ENCODE measurements at regions of chr14 and their contacts with region 1.

Region 1: DNA sequence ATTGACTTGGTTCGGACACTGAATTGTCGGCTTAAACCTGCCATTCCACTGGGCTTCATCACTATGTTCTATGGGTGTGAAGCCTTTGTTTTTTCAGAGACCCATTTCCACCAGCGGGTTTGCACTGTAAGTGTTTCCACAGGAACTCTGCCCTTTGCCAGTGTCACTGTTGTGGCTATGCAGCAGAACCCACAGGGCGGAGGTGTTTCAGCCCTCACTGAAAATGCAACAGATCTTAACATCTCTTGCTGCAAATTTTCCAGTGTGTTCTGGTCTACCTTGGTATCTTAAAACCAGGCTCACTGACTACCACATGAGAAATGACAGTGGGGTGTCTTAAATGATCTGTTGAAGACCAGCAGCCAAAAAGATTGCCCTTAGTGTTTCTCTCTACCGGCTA is 21.1 kb downstream of the PRKCH start:
- DNase-seq: peak; percentile 48 to 93 (median 84)
- ATAC-seq: peak; percentile 52 to 64
- H3K4me3 Mint-ChIP-seq: peak overlapping the region; percentile 69 to 92 (median 86)
- H3K27ac Mint-ChIP-seq: peak overlapping the region in 9 of 10 donors; percentile 94 to 100 (median 99)
- H3K4me1 Mint-ChIP-seq: peaks cover 53 to 97% (median 94%) of the 10 kb centered on the region in 4 donors
- H3K27me3 Mint-ChIP-seq: no peaks in the 10 kb centered on the region

Region 2: DNA sequence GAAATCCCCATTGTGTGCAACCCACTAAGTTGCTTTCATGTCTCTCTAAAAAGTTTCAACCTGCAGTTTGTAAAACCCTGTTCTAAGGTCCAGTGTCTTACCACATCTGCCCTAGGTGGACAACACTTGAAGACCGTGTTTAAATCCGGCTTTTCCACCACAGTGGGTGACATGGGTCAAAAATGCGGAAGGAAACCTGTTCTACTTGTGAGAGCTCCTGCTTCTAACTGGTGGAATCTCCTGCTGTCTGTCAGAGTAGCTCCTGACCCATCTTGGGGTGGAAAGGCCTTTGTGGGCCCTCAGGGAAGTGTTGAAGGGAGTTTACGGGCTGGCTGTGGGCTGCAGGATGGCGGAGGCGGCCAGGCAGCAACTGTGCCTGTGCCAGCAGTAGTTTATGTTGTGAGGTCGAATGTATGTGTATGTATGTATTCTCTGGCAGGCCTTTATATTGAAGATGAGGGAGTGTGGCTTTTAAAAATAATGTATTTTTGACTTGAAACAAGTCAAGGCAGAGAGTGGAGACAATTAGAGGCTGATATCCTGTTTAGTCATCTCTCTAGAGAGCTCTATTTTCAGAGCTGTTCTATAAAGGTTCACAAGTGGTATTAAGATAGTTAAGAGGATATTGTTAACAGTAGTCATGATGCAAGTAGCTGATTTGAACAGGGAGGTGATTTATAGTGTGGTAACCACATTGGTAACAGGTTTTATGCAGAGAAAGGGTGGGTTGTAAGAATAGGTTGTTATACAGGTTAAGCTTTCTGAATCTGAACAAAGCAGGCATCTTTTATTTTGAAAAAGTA is 45.9 kb after region 1 on chr14:
- POLR2A ChIA-PET with region 1: interaction called, 30 read pairs
- DNase-seq: peak in 4 of 10 donors; percentile 29 to 54 (median 50)
- ATAC-seq: peak; percentile 51 to 68
- H3K4me3 Mint-ChIP-seq: peak overlapping the region in 2 of 10 donors; percentile 54 to 86
- H3K27ac Mint-ChIP-seq: no peak overlapping the region
- H3K4me1 Mint-ChIP-seq: peaks cover 0 to 17% (median 7%) of the 10 kb centered on the region in 4 donors
- H3K27me3 Mint-ChIP-seq: no peaks in the 10 kb centered on the region

Region 3: DNA sequence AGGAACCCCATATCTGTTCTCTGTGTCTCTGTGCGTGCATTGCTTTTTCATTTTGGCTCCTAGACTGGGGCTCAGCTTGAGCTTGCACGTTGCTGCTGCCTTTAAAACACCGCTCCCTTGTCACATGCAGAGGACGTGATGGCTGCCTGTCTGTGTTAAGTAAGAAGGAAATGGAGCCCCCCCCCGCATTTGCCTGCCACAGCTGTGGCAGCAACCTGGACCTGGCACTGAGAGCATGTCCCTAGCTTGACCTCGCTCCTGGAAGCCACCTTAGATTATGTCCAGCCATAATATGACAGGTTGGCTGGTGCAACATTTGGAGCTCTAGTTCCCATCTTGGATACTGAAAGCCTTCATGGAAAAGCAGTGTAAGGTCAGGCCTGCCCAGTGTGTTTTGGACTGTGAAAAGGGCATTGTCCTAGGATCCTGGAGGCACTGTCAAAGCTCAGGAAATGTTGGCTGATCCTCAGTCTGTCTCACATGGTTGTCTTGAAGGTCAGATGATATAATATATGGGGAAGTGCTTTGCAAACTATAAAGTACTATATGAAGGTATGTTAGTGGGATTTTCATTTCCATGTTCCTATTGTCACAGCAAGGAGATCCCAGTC is 52.7 kb after region 1 on chr14:
- POLR2A ChIA-PET with region 1: interaction called, 10 read pairs
- DNase-seq: peak in 3 of 10 donors; percentile 43 to 65 (median 48)
- ATAC-seq: peak; percentile 14 to 52
- H3K4me3 Mint-ChIP-seq: peak overlapping the region in 9 of 10 donors; percentile 2 to 85 (median 60)
- H3K27ac Mint-ChIP-seq: peak overlapping the region in 7 of 10 donors; percentile 89 to 92 (median 91)
- H3K4me1 Mint-ChIP-seq: peaks cover 9 to 77% (median 31%) of the 10 kb centered on the region in 4 donors
- H3K27me3 Mint-ChIP-seq: no peaks in the 10 kb centered on the region

Region 4: GRCh38 chr14:62420847-62421246 is 1078.4 kb after region 1 on chr14:
- POLR2A ChIA-PET with region 1: no interaction called
- DNase-seq: no peak
- ATAC-seq: no peak
- H3K4me3 Mint-ChIP-seq: no peak overlapping the region
- H3K27ac Mint-ChIP-seq: no peak overlapping the region
- H3K4me1 Mint-ChIP-seq: no peaks in the 10 kb centered on the region
- H3K27me3 Mint-ChIP-seq: no peaks in the 10 kb centered on the region